Calu3 (cell line): ENCODE measurements at regions of chr2 and their contacts with region 1.

Region 1: DNA sequence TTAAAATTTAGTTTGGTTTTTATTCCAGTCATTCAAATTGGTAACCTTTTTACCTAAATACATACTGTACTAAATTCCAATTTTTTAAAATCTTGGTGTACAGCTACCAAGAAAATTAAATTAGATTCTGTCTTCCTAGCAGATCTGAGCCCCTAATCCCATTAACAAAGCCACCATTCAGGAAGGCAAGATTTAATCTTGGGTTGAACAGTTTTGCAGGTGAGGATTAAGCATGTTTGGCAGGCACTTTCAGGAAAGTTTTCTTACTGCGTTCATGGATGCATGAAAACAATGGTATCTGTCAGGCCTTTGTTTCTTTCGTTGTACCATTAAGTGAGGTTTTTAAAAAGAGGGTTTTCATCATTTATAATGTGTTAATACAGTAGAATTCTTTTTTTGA is 32.8 kb downstream of the ITPRID2 start:
- DNase-seq: no peak
- H3K4me3 Mint-ChIP-seq: peak overlapping the region; percentile 18
- H3K27ac Mint-ChIP-seq: peak overlapping the region; percentile 21
- H3K4me1 Mint-ChIP-seq: peaks cover 21% of the 10 kb centered on the region
- H3K27me3 Mint-ChIP-seq: no peaks in the 10 kb centered on the region
- CTCF ChIP-seq: no peak

Region 2: GRCh38 chr2:181850936-181851560 is 73.3 kb before region 1 on chr2:
- CTCF ChIA-PET with region 1: no interaction called
- intact Hi-C with region 1: no loop called
- DNase-seq: no peak
- H3K4me3 Mint-ChIP-seq: no peak overlapping the region
- H3K27ac Mint-ChIP-seq: peak overlapping the region; percentile 69
- H3K4me1 Mint-ChIP-seq: peaks cover 47% of the 10 kb centered on the region
- H3K27me3 Mint-ChIP-seq: no peaks in the 10 kb centered on the region
- CTCF ChIP-seq: no peak

Region 3: DNA sequence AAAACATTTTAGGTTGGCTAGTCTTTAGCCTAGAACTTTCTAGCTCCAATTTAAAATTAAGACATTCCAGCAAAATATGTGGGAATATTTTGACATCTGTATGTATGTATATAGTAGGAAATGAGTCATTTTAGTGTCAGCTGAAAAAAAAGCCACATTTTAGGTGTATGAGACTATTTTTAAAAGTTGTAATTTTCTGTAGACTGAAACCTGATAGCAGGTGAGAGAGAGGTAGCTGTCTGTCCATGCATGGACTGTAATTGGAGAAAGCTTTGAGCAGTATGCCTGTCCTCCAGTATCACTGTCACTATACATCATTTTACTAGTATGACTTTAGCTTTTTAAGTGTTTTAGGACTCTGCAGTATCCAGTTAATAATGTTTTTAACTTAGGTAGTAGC is 35.2 kb after region 1 on chr2:
- CTCF ChIA-PET with region 1: no interaction called
- intact Hi-C with region 1: no loop called
- DNase-seq: no peak
- H3K4me3 Mint-ChIP-seq: no peak overlapping the region
- H3K27ac Mint-ChIP-seq: no peak overlapping the region
- H3K4me1 Mint-ChIP-seq: peaks cover 32% of the 10 kb centered on the region
- H3K27me3 Mint-ChIP-seq: no peaks in the 10 kb centered on the region
- CTCF ChIP-seq: no peak

Region 4: GRCh38 chr2:181998045-181998835 is 73.9 kb after region 1 on chr2:
- CTCF ChIA-PET with region 1: no interaction called
- intact Hi-C with region 1: loop called (anchors 5 kb)
- DNase-seq: peak; percentile 18
- H3K4me3 Mint-ChIP-seq: peak overlapping the region; percentile 36
- H3K27ac Mint-ChIP-seq: peak overlapping the region; percentile 75
- H3K4me1 Mint-ChIP-seq: peaks cover 10% of the 10 kb centered on the region
- H3K27me3 Mint-ChIP-seq: no peaks in the 10 kb centered on the region
- CTCF ChIP-seq: no peak